ENCODE measurements at regions of chr6 and their contacts with region 1.

Region 1: DNA sequence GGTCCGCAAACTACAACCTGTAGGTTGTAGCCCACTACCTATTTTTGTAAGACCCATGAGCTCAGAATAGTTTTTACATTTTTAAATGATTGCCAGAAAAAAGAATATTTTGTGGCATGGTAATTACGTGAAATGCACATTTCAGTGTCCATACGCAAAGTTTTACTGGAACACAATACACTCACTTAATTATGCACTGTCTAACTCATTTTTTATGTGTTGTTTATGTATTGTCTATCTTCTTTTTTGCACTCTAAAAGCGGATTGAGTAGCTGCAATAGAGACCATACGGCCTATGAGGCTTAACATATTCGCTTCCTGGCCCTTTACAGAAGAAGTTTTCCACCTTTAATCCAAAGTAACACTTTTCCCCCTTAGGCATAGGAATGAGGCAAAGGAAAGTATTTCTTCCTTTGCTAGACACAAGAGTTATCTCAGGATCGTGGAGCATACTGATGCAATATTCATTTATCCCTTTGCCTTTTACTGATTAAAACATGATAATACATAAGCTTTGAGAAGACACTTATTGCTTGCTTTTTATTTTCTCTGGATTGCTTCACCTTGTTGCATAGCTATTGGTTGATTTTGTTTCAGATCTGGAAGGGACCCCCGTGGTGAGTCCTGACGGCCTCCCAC is 69.8 kb downstream of the FNDC1 start:
- DNase-seq: no peak
- ATAC-seq: no peak
- H3K4me3 ChIP-seq: no peak overlapping the region
- H3K4me3 Mint-ChIP-seq: no peak overlapping the region
- H3K27ac ChIP-seq: no peak overlapping the region
- H3K27ac Mint-ChIP-seq: no peak overlapping the region
- H3K4me1 ChIP-seq: no peaks in the 10 kb centered on the region
- H3K4me1 Mint-ChIP-seq: peaks cover 2 to 8% (median 3%) of the 10 kb centered on the region in 3 donors
- H3K27me3 ChIP-seq: peaks cover 12 to 13% of the 10 kb centered on the region in 2 experiments
- H3K27me3 Mint-ChIP-seq: peaks cover 49 to 50% of the 10 kb centered on the region in 2 donors

Region 2: DNA sequence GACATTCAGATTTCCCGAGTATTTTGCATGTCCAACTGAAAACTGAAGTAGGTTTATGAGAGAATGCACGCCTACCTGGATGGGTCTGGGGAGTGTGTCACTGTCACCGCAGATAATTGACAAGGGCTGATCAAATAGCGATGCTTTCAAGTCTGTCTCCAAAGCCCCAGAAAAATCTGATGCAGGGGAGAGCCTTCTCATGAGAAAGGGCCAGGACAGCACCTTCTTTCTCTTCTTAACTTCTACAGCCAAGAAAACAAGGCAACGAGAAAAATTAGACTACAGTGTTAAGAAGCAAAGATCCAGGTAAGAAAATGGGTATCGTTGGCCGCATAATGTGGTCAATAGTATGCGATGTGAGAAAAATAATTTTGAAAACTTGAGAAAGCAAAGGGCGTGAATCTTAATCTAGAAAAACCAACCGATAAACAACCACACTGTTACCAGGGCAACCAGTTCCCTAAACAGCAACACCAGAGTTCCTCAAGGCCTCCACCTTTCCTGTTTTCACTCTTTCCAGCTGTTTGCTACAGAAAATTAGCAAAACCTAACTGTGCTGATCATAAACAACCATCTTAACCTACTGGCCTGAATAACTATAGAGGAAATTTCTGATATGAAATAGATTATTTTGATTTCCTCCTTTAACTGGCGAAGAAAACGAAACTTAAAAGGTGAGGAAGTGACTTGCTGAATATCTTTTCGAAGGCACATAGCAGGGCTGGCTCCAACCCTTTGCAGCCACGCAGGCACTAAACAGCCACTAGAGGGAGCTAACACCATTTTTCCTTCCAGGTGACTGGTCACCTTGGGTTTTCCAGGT is 196.8 kb before region 1 on chr6:
- CTCF ChIA-PET with region 1: no interaction called
- POLR2A ChIA-PET with region 1: no interaction called
- DNase-seq: peak; percentile 50 to 94 (median 69)
- ATAC-seq: peak; percentile 62 to 68 (median 64)
- H3K4me3 ChIP-seq: peak overlapping the region; percentile 69 to 95
- H3K4me3 Mint-ChIP-seq: peak overlapping the region; percentile 96 to 98 (median 96)
- H3K27ac ChIP-seq: peak overlapping the region; percentile 90
- H3K27ac Mint-ChIP-seq: peak overlapping the region; percentile 98
- H3K4me1 ChIP-seq: peaks cover 51 to 53% of the 10 kb centered on the region in 2 experiments
- H3K4me1 Mint-ChIP-seq: peaks cover 64 to 68% (median 67%) of the 10 kb centered on the region in 3 donors
- H3K27me3 ChIP-seq: no peaks in the 10 kb centered on the region
- H3K27me3 Mint-ChIP-seq: no peaks in the 10 kb centered on the region

Region 3: GRCh38 chr6:159217595-159218275 is 21.3 kb before region 1 on chr6:
- CTCF ChIA-PET with region 1: no interaction called
- POLR2A ChIA-PET with region 1: interaction called in 1 of 2 experiments, 12 read pairs
- DNase-seq: peak in 2 of 35 experiments; percentile 6 to 17
- ATAC-seq: peak in 1 of 4 experiments; percentile 16
- H3K4me3 ChIP-seq: no peak overlapping the region
- H3K4me3 Mint-ChIP-seq: no peak overlapping the region
- H3K27ac ChIP-seq: no peak overlapping the region
- H3K27ac Mint-ChIP-seq: no peak overlapping the region
- H3K4me1 ChIP-seq: no peaks in the 10 kb centered on the region
- H3K4me1 Mint-ChIP-seq: peaks cover 0 to 6% (median 4%) of the 10 kb centered on the region in 3 donors
- H3K27me3 ChIP-seq: peaks cover 0 to 32% of the 10 kb centered on the region in 2 experiments
- H3K27me3 Mint-ChIP-seq: peaks cover 16 to 24% of the 10 kb centered on the region in 2 donors

Region 4: GRCh38 chr6:159324596-159324995 is 85.6 kb after region 1 on chr6:
- CTCF ChIA-PET with region 1: no interaction called
- POLR2A ChIA-PET with region 1: no interaction called
- DNase-seq: no peak
- ATAC-seq: no peak
- H3K4me3 ChIP-seq: no peak overlapping the region
- H3K4me3 Mint-ChIP-seq: no peak overlapping the region
- H3K27ac ChIP-seq: no peak overlapping the region
- H3K27ac Mint-ChIP-seq: no peak overlapping the region
- H3K4me1 ChIP-seq: no peaks in the 10 kb centered on the region
- H3K4me1 Mint-ChIP-seq: no peaks in the 10 kb centered on the region
- H3K27me3 ChIP-seq: peaks cover 0 to 4% of the 10 kb centered on the region in 2 experiments
- H3K27me3 Mint-ChIP-seq: peaks cover 15 to 20% of the 10 kb centered on the region in 2 donors